CD8-positive, alpha-beta T cell (primary cell): ENCODE measurements at regions of chr7 and their contacts with region 1.

Region 1: DNA sequence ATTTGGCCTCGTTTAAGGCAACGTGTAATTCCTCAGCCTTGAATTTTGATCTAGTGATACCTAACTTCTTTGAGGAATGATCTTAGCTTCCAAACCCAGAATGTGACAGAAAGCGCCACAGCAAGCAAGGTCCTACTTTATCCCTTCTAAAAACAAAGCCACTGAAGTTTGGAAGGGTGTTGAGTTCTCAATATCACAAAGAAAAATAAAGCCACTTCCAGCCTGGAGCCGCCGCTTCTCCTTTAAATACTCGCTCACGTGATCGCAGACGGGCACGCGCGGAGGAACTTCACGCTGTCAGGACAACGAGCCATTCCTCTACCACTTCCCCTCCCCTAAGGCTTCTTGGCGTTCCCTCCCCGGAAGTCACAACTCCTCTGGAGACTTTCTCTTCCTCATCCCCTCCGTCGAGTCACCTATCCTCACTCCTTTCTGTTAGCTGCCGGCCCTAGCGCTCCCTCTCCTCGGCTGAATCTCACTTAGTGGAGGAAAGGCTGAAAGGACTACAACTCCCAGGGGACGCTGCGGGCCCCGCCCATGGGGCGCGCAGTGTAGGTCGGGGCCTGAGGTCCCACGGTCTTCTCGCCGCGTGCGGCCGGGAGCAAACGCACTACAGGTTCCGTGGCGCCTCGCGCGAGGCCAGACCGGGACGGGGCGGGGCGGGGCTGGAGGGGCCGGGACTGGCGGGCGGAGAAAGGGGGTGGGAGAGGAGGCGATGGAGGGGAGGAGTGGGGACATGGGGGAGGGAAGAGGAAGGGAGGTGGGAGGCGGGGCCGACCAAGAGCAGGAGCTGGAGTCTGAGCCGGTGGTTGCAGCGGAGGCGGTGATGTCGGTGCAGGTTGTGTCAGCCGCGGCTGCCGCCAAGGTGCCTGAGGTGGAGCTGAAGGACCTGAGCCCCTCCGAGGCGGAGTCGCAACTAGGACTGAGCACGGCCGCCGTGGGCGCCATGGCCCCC is at the start of gene AHCYL2:
- DNase-seq: peak; percentile 96 to 99 (median 97)
- ATAC-seq: peak; percentile 87
- H3K4me3 ChIP-seq: peak within 1 kb of the TSS; percentile 71 to 96
- H3K4me3 Mint-ChIP-seq: peak within 1 kb of the TSS; percentile 95
- H3K27ac ChIP-seq: peak within 1 kb of the TSS; percentile 76 to 91
- H3K27ac Mint-ChIP-seq: peak within 1 kb of the TSS; percentile 93
- H3K4me1 ChIP-seq: peaks cover 26% of the 10 kb centered on the region
- H3K4me1 Mint-ChIP-seq: peaks cover 44% of the 10 kb centered on the region
- H3K27me3 ChIP-seq: no peaks in the 10 kb centered on the region
- H3K27me3 Mint-ChIP-seq: no peaks in the 10 kb centered on the region
- CTCF ChIP-seq: no peak
- total RNA-seq, gene AHCYL2: 3.1 to 5.8 TPM

Region 2: GRCh38 chr7:128409596-128410160 is 814.9 kb before region 1 on chr7 and contains the start of gene IMPDH1:
- CTCF ChIA-PET with region 1: no interaction called
- POLR2A ChIA-PET with region 1: no interaction called
- intact Hi-C with region 1: loop called in 1 of 2 experiments (anchors 10 kb)
- DNase-seq: peak; percentile 65 to 92 (median 86)
- ATAC-seq: peak; percentile 75
- H3K4me3 ChIP-seq: peak within 1 kb of the TSS; percentile 93 to 99
- H3K4me3 Mint-ChIP-seq: peak within 1 kb of the TSS; percentile 91
- H3K27ac ChIP-seq: peak within 1 kb of the TSS; percentile 74 to 84
- H3K27ac Mint-ChIP-seq: peak within 1 kb of the TSS; percentile 84
- H3K4me1 ChIP-seq: peaks cover 37% of the 10 kb centered on the region
- H3K4me1 Mint-ChIP-seq: peaks cover 40% of the 10 kb centered on the region
- H3K27me3 ChIP-seq: no peaks in the 10 kb centered on the region
- H3K27me3 Mint-ChIP-seq: no peaks in the 10 kb centered on the region
- CTCF ChIP-seq: no peak
- total RNA-seq, gene IMPDH1: 19.6 to 20.6 TPM

Region 3: DNA sequence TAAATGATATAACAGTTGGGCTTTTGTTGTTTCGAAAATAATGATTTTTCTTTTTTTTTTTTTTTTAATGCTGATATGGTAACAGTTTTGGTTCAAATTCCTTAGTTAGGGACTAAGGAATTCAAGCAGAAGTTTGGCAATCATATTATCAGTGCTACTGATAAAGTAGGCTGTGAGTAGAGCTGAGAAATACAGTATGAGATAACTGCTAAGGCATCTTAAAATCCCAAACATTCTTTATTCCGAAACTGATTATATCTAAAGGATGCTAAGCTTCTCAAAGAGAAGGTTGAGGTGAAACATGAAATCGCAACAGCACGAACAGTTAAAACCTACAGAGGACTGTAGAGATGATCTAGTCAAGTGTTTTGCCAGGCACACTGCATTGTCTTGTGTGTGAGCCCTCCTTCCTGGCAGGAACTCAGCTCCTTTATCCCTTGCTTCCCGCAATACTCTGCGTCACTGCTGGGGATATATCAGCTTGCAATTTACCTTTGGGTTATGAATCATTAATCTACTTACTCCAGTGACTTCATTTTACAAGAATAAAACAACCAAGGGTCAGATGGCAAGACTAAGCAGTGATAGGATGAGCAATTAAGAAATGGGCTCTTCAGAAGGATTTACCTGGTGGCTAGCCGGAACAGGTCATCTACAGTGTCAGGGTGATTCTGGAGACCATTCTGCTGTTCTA is 250.1 kb before region 1 on chr7:
- CTCF ChIA-PET with region 1: no interaction called
- POLR2A ChIA-PET with region 1: no interaction called
- intact Hi-C with region 1: no loop called
- DNase-seq: no peak
- ATAC-seq: no peak
- H3K4me3 ChIP-seq: no peak overlapping the region
- H3K4me3 Mint-ChIP-seq: no peak overlapping the region
- H3K27ac ChIP-seq: no peak overlapping the region
- H3K27ac Mint-ChIP-seq: no peak overlapping the region
- H3K4me1 ChIP-seq: no peaks in the 10 kb centered on the region
- H3K4me1 Mint-ChIP-seq: no peaks in the 10 kb centered on the region
- H3K27me3 ChIP-seq: no peaks in the 10 kb centered on the region
- H3K27me3 Mint-ChIP-seq: no peaks in the 10 kb centered on the region
- CTCF ChIP-seq: no peak

Region 4: GRCh38 chr7:129054438-129055293 is 169.9 kb before region 1 on chr7 and contains the start of gene TNPO3:
- CTCF ChIA-PET with region 1: no interaction called
- POLR2A ChIA-PET with region 1: no interaction called
- intact Hi-C with region 1: loop called (anchors 1 to 2 kb)
- DNase-seq: peak; percentile 77 to 94 (median 90)
- ATAC-seq: peak; percentile 86
- H3K4me3 ChIP-seq: peak within 1 kb of the TSS; percentile 80 to 89
- H3K4me3 Mint-ChIP-seq: peak within 1 kb of the TSS; percentile 96
- H3K27ac ChIP-seq: peak within 1 kb of the TSS; percentile 84 to 93
- H3K27ac Mint-ChIP-seq: peak within 1 kb of the TSS; percentile 98
- H3K4me1 ChIP-seq: peaks cover 29% of the 10 kb centered on the region
- H3K4me1 Mint-ChIP-seq: peaks cover 38% of the 10 kb centered on the region
- H3K27me3 ChIP-seq: no peaks in the 10 kb centered on the region
- H3K27me3 Mint-ChIP-seq: peaks cover 3% of the 10 kb centered on the region
- CTCF ChIP-seq: no peak
- total RNA-seq, gene TNPO3: 17.0 to 17.2 TPM

Region 5: DNA sequence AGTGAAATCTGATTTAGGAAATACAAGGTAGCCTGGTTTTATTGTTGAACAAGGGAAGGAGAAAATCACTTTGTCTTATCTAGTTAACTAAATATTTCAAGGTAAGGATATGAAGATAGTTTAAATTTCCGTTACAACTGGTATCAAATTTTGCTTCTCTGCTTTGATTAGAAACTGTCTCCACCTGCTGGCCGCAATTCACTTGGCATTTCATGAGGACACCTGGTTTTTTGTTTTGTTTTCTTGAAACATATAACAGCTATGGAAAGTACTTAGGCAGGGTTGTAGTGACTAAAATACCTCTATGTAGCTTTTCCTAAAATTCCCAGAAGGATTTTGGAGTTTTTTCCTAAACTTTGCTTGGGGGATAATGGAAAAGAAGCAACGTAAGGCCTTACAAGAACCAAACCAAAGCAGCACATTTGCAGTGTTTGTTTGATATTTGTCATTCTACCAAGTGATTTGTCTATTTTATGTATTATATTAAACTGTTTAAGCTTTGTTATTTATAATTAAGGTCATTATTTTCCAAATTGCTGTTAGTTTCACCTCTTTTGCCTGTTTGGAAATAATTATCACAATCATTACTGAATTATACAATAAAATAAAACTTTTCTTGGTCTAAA is 73.9 kb after region 1 on chr7:
- CTCF ChIA-PET with region 1: interaction called, 83 read pairs
- POLR2A ChIA-PET with region 1: no interaction called
- intact Hi-C with region 1: loop called in 1 of 2 experiments (anchors 1 kb)
- DNase-seq: peak in 8 of 9 experiments; percentile 19 to 63 (median 54)
- ATAC-seq: no peak
- H3K4me3 ChIP-seq: no peak overlapping the region
- H3K4me3 Mint-ChIP-seq: no peak overlapping the region
- H3K27ac ChIP-seq: no peak overlapping the region
- H3K27ac Mint-ChIP-seq: no peak overlapping the region
- H3K4me1 ChIP-seq: no peaks in the 10 kb centered on the region
- H3K4me1 Mint-ChIP-seq: no peaks in the 10 kb centered on the region
- H3K27me3 ChIP-seq: no peaks in the 10 kb centered on the region
- H3K27me3 Mint-ChIP-seq: no peaks in the 10 kb centered on the region
- CTCF ChIP-seq: peak; percentile 70

Region 6: GRCh38 chr7:129502376-129502776 is 277.8 kb after region 1 on chr7 and contains the start of gene SMKR1:
- CTCF ChIA-PET with region 1: no interaction called
- POLR2A ChIA-PET with region 1: no interaction called
- intact Hi-C with region 1: loop called in 1 of 2 experiments (anchors 2 kb)
- DNase-seq: peak; percentile 85 to 98 (median 93)
- ATAC-seq: peak; percentile 95
- H3K4me3 ChIP-seq: peak within 1 kb of the TSS; percentile 63 to 71
- H3K4me3 Mint-ChIP-seq: peak within 1 kb of the TSS; percentile 79
- H3K27ac ChIP-seq: peak within 1 kb of the TSS; percentile 64 to 75
- H3K27ac Mint-ChIP-seq: peak within 1 kb of the TSS; percentile 86
- H3K4me1 ChIP-seq: peaks cover 13% of the 10 kb centered on the region
- H3K4me1 Mint-ChIP-seq: peaks cover 17% of the 10 kb centered on the region
- H3K27me3 ChIP-seq: no peaks in the 10 kb centered on the region
- H3K27me3 Mint-ChIP-seq: no peaks in the 10 kb centered on the region
- CTCF ChIP-seq: no peak
- total RNA-seq, gene SMKR1: 0.56 to 0.68 TPM

Region 7: GRCh38 chr7:130047821-130048220 is 823.3 kb after region 1 on chr7:
- CTCF ChIA-PET with region 1: no interaction called
- POLR2A ChIA-PET with region 1: no interaction called
- intact Hi-C with region 1: loop called in 1 of 2 experiments (anchors 10 kb)
- DNase-seq: no peak
- ATAC-seq: no peak
- H3K4me3 ChIP-seq: no peak overlapping the region
- H3K4me3 Mint-ChIP-seq: no peak overlapping the region
- H3K27ac ChIP-seq: no peak overlapping the region
- H3K27ac Mint-ChIP-seq: no peak overlapping the region
- H3K4me1 ChIP-seq: peaks cover 3% of the 10 kb centered on the region
- H3K4me1 Mint-ChIP-seq: peaks cover 14% of the 10 kb centered on the region
- H3K27me3 ChIP-seq: no peaks in the 10 kb centered on the region
- H3K27me3 Mint-ChIP-seq: no peaks in the 10 kb centered on the region
- CTCF ChIP-seq: no peak